AG04449 (cell line): ENCODE measurements at regions of chr3 and their contacts with region 1.

Region 1: GRCh38 chr3:55189359-55189801 is 261.5 kb upstream of the LRTM1 start:
- DNase-seq: peak; percentile 76
- H3K4me3 ChIP-seq: no peak overlapping the region
- CTCF ChIP-seq: no peak

Region 2: DNA sequence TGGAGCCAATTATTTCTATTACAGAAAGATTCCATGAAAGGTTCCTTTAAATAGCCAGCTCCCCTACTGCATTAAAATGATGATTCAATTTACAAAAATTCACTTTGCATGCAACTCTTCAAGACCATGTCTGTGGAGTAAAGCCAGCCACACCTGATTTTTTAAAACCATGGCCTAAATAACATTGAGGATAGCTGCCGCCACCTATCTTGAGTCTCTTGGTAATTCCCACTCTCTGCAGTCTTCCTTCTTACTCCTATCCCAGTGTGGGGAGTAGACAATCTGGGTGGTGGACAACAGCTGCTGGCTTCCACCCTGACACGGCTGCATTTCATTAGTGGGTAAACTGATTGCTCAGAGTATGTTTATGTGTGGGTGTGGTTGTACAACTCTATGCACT is 272.2 kb before region 1 on chr3:
- CTCF ChIA-PET with region 1: no interaction called
- POLR2A ChIA-PET with region 1: no interaction called
- DNase-seq: no peak
- H3K4me3 ChIP-seq: no peak overlapping the region
- CTCF ChIP-seq: no peak

Region 3: GRCh38 chr3:55476515-55476914 is 287.1 kb after region 1 on chr3:
- CTCF ChIA-PET with region 1: interaction called, 3 read pairs
- POLR2A ChIA-PET with region 1: interaction called, 20 read pairs
- DNase-seq: no peak
- H3K4me3 ChIP-seq: peak overlapping the region; percentile 98
- CTCF ChIP-seq: no peak

Region 4: GRCh38 chr3:55485211-55485791 is 295.9 kb after region 1 on chr3:
- CTCF ChIA-PET with region 1: interaction called, 3 read pairs
- POLR2A ChIA-PET with region 1: interaction called, 12 read pairs
- DNase-seq: no peak
- H3K4me3 ChIP-seq: peak overlapping the region; percentile 98
- CTCF ChIP-seq: peak; percentile 80